ENCODE measurements at regions of chr11 and their contacts with region 1.

Region 1: GRCh38 chr11:71977743-71978418 is 20.8 kb upstream of the IL18BP start:
- DNase-seq: peak; percentile 67
- H3K4me3 ChIP-seq: no peak overlapping the region
- H3K27ac ChIP-seq: no peak overlapping the region
- H3K4me1 ChIP-seq: no peaks in the 10 kb centered on the region
- H3K27me3 ChIP-seq: no peaks in the 10 kb centered on the region
- CTCF ChIP-seq: peak; percentile 54 to 57
- POLR2A ChIP-seq: no peak

Region 2: DNA sequence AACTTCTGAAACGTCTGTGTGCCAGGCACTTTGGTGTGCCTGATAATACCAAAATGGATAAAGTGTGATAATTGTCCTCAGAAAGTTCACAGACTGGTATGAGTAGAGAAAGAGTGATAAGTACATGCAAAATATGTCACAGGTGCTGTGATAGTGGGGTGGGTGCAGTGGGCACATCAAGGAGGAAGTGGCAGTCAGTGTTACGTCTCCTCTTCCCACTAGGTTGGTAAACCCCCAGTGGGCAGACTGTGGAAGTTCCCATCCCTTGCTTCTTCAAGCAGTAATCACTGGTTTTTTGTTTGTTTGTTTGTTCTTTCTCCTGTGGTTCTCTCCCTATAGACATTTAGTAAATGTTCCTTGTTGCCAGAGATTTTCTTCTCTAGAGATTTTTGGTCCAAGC is 43.7 kb before region 1 on chr11:
- CTCF ChIA-PET with region 1: interaction called, 12 read pairs
- POLR2A ChIA-PET with region 1: no interaction called
- dilution Hi-C with region 1: no loop called
- intact Hi-C with region 1: no loop called
- DNase-seq: no peak
- H3K4me3 ChIP-seq: no peak overlapping the region
- H3K27ac ChIP-seq: peak overlapping the region; percentile 57
- H3K4me1 ChIP-seq: peaks cover 85% of the 10 kb centered on the region
- H3K27me3 ChIP-seq: no peaks in the 10 kb centered on the region
- CTCF ChIP-seq: no peak
- POLR2A ChIP-seq: no peak

Region 3: DNA sequence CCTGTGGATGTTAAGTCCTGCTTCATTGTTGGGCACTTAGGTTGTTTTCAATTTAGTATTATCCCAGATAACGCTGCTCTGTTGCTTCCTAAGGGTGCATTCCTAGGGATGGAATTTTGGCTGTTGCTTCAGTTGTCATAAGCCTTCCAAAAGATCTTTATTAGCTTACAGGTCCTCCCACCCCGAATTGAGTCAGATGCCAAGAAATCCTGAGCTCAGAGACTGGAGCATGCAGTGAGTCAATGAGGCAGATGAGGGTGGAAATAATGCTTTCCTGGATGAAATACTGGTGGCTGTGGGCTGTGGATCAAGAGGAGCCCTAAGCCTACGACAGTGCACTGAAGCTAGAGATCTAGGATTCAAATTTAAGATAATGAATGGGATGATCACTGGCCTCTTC is 10.2 kb after region 1 on chr11:
- CTCF ChIA-PET with region 1: interaction called, 16 read pairs
- POLR2A ChIA-PET with region 1: no interaction called
- dilution Hi-C with region 1: no loop called
- intact Hi-C with region 1: no loop called
- DNase-seq: no peak
- H3K4me3 ChIP-seq: no peak overlapping the region
- H3K27ac ChIP-seq: no peak overlapping the region
- H3K4me1 ChIP-seq: no peaks in the 10 kb centered on the region
- H3K27me3 ChIP-seq: no peaks in the 10 kb centered on the region
- CTCF ChIP-seq: no peak
- POLR2A ChIP-seq: no peak

Region 4: DNA sequence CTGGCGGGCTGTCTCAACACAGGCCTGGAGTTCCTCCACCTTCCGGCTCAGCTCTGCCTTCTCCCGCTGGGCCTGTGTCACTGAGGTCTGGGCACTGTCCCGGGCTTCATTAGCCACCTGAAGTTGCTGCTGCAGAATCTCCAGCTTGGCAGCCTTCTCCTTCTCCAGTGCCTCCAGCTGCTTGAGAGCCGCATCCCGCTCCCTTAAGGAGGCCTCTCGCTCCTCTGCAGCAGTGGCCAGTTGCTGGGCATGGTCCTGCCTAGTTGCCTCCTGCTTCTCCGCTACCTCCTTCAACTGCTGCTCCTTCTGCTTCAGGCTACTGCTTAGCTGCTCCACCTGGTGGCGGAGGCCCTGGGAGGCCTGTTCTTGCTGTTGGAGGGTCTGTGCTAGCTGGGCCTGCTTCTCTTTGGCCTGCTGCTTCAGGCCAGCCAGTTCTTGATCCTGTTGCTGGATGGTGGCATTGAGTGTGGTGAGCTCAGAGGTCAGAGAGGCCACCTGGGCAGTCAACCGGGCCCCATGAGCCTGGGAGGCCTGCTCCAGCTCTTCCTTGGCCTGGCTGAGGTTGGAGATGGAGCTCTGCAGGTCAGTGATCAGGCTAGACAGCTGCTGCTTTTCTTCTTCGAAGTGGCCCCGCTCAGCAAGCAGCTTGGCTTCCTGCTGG is 37.8 kb after region 1 on chr11:
- CTCF ChIA-PET with region 1: interaction called, 38 read pairs
- POLR2A ChIA-PET with region 1: no interaction called
- dilution Hi-C with region 1: no loop called
- intact Hi-C with region 1: no loop called
- DNase-seq: no peak
- H3K4me3 ChIP-seq: no peak overlapping the region
- H3K27ac ChIP-seq: no peak overlapping the region
- H3K4me1 ChIP-seq: no peaks in the 10 kb centered on the region
- H3K27me3 ChIP-seq: no peaks in the 10 kb centered on the region
- CTCF ChIP-seq: peak; percentile 24 to 57
- POLR2A ChIP-seq: no peak

Region 5: DNA sequence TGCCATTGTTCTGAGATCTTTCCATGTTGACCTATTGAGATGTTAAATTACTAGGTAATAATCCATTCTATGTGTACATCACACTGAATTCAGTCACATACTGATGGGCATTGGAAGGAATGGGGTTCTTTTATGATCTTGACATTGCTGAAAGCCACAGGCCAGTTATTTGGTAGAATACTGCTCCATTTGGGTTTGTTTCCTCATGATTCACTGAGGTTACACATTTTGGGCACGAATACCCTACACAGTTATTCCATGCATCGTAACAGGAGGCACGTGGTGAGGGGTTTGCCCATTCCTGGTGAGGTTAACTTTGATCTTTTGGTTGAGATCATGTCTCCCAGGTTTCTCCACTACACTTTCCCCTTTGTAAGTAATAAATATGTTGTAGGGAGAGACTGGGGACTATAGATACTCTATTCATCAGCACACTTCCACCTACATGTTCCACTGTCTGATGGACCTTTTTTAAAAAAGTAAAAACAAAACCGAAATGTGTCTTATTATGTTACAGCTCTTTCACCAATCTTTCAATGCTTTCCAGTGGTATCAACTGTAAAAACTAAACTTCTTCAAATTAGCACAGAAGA is 202.0 kb after region 1 on chr11:
- CTCF ChIA-PET with region 1: interaction called, 5 read pairs
- POLR2A ChIA-PET with region 1: no interaction called
- dilution Hi-C with region 1: no loop called
- intact Hi-C with region 1: loop called (anchors 1 kb)
- DNase-seq: no peak
- H3K4me3 ChIP-seq: no peak overlapping the region
- H3K27ac ChIP-seq: no peak overlapping the region
- H3K4me1 ChIP-seq: no peaks in the 10 kb centered on the region
- H3K27me3 ChIP-seq: peaks cover 11% of the 10 kb centered on the region in 2 experiments
- CTCF ChIP-seq: no peak
- POLR2A ChIP-seq: no peak

Region 6: DNA sequence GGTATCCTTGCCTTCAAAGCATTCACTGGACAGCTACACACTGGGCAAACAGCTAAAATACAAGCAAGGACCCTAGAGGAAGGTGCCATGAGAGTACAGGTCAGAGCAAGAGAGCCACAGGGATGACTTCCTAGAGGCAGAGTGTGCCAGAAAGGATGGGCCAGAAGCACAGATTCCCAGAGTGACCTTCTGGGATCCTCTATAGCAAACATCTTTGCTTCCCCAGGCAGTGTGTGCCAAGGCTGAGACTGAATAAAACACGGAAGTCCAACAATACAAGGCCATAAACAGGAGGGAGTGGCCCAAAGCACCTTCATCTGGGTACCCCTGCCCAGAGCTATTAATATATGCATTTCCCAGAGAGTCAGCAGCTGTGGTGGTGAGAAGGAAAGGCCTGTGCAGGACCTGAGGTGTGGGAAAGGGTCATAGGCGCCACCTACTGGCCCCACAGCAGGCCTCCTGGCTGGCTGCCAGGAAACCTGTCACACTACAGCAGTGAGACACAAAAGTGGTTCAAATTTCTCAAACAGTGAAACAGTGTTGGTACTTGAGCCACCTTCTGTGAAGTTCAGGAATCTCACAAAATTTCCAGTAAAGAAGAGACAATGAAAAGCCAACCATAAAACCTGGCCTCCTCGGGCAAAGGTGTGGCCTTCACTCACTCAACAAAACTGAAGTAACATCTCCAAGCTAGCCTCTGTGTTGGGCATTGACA is 436.2 kb after region 1 on chr11:
- CTCF ChIA-PET with region 1: interaction called, 3 read pairs
- POLR2A ChIA-PET with region 1: no interaction called
- dilution Hi-C with region 1: no loop called
- intact Hi-C with region 1: loop called (anchors 2 kb)
- DNase-seq: peak; percentile 81
- H3K4me3 ChIP-seq: no peak overlapping the region
- H3K27ac ChIP-seq: no peak overlapping the region
- H3K4me1 ChIP-seq: no peaks in the 10 kb centered on the region
- H3K27me3 ChIP-seq: no peaks in the 10 kb centered on the region
- CTCF ChIP-seq: peak; percentile 90 to 92
- POLR2A ChIP-seq: no peak

Measured in endothelial cell of umbilical vein (primary cell).